ENCODE measurements at regions of chr12 and their contacts with region 1.

Region 1: GRCh38 chr12:116099652-116100432 is 177.7 kb downstream of the MED13L start:
- DNase-seq: no peak
- ATAC-seq: no peak
- H3K4me3 ChIP-seq: no peak overlapping the region
- H3K4me3 Mint-ChIP-seq: no peak overlapping the region
- H3K27ac ChIP-seq: no peak overlapping the region
- H3K27ac Mint-ChIP-seq: no peak overlapping the region
- H3K4me1 ChIP-seq: peaks cover 8 to 15% of the 10 kb centered on the region in 2 donors
- H3K4me1 Mint-ChIP-seq: peaks cover 42% of the 10 kb centered on the region
- H3K27me3 ChIP-seq: no peaks in the 10 kb centered on the region
- H3K27me3 Mint-ChIP-seq: no peaks in the 10 kb centered on the region
- CTCF ChIP-seq: no peak

Region 2: DNA sequence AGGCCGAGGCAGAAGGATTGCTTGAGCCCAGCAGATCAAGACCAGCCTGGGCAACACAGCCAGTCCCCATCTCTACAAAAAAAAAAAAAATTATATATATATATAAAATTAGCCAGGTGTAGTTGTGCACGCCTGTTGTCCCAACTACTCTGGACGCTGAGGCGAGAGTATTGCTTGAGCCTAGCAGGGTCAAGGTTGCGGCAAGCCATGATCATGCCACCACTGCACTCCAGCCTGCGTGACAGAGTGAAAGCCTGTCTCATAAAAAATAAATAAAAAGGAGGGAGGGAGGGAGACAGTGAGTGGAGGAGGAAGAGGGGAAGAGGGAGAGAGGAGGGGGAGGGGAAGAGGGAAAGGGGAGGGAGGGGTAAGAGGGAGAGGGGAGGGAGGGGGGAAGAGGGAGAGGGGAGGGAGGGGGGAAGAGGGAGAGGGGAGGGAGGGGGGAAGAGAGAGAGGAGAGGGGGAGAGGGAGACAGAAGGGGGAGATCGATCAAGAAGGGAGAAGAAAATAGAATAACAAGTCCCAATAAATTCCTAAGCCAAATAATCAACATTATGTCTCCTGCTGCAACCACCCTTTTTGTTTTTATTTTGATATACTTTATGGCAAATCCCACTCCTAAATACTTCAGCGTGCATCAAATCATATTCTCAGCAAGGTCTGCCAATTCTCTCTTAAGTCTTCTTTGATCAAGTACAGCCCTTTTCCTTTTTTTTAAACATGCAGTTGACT is 13.7 kb after region 1 on chr12:
- CTCF ChIA-PET with region 1: no interaction called
- POLR2A ChIA-PET with region 1: no interaction called
- intact Hi-C with region 1: loop called (anchors 2 kb)
- DNase-seq: no peak
- ATAC-seq: no peak
- H3K4me3 ChIP-seq: no peak overlapping the region
- H3K4me3 Mint-ChIP-seq: no peak overlapping the region
- H3K27ac ChIP-seq: no peak overlapping the region
- H3K27ac Mint-ChIP-seq: no peak overlapping the region
- H3K4me1 ChIP-seq: no peaks in the 10 kb centered on the region
- H3K4me1 Mint-ChIP-seq: peaks cover 39% of the 10 kb centered on the region
- H3K27me3 ChIP-seq: no peaks in the 10 kb centered on the region
- H3K27me3 Mint-ChIP-seq: no peaks in the 10 kb centered on the region
- CTCF ChIP-seq: no peak

Measured in B cell (primary cell).